Caco-2 (cell line): ENCODE measurements at regions of chr9 and their contacts with region 1.

Region 1: DNA sequence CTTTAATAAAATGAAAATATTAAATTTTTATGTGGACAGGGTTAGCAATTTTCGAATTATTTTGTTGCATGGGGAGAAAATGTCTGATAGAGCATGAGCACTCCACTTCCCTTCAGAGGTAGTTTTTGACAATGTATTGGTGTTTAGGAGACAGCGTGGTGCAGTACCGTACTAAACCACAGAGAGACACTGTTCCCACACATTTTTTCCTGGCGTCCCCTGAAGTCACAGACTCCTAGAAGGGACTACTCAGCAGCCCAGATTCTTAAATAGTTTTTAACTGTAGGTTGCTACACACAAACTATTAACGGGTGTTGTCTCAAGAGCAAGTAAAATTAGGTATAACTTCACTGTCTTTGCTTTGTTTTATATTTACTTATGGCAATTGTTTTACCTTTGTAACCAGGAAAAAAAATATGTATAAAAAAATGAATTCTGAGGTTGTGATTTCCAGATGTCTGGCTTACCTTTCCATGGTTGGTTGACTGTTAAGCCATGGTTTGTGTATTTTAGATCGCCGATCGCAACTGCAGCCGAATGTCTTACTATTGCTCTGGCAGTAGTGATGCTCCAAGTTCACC is 171.2 kb downstream of the DOCK8 start:
- DNase-seq: peak; percentile 55 to 63
- H3K4me3 ChIP-seq: no peak overlapping the region
- H3K4me3 Mint-ChIP-seq: no peak overlapping the region
- H3K27ac Mint-ChIP-seq: no peak overlapping the region
- H3K4me1 ChIP-seq: peaks cover 13% of the 10 kb centered on the region; the same call in 1 of the 2 replicates
- H3K4me1 Mint-ChIP-seq: no peaks in the 10 kb centered on the region
- H3K27me3 ChIP-seq: no peaks in the 10 kb centered on the region
- H3K27me3 Mint-ChIP-seq: no peaks in the 10 kb centered on the region
- CTCF ChIP-seq: peak; percentile 82 to 83

Region 2: GRCh38 chr9:469672-470551 is 84.0 kb after region 1 on chr9:
- CTCF ChIA-PET with region 1: no interaction called
- POLR2A ChIA-PET with region 1: no interaction called
- intact Hi-C with region 1: loop called (anchors 5 kb)
- DNase-seq: peak; percentile 85
- H3K4me3 ChIP-seq: peak overlapping the region; percentile 61
- H3K4me3 Mint-ChIP-seq: peak overlapping the region; percentile 94
- H3K27ac Mint-ChIP-seq: peak overlapping the region; percentile 95
- H3K4me1 ChIP-seq: peaks cover 28% of the 10 kb centered on the region
- H3K4me1 Mint-ChIP-seq: peaks cover 13% of the 10 kb centered on the region
- H3K27me3 ChIP-seq: no peaks in the 10 kb centered on the region
- H3K27me3 Mint-ChIP-seq: no peaks in the 10 kb centered on the region
- CTCF ChIP-seq: no peak

Region 3: DNA sequence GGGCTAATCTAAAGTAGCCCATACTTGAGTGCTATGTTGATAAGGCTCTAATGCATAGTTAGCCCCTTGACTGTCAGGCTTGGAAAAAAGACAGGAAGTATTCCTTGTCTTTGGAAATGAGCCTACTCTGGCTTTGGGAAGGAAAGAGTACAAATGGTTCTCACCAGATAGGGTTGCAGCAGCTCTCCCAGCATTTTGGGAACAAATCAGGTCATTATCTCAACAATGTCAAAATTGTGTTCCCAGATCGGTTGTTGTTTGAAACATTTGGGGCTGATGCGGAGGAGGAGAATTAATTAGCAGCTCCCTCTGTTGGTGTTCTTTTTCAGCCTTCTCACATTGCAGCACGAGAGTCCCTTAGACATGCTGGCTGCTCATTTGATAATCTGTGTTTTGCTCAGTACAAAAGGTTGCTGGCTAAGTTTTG is 160.9 kb after region 1 on chr9:
- CTCF ChIA-PET with region 1: no interaction called
- POLR2A ChIA-PET with region 1: no interaction called
- intact Hi-C with region 1: loop called (anchors 2 kb)
- DNase-seq: peak in 1 of 2 experiments; percentile 17
- H3K4me3 ChIP-seq: no peak overlapping the region
- H3K4me3 Mint-ChIP-seq: no peak overlapping the region
- H3K27ac Mint-ChIP-seq: peak overlapping the region; percentile 35
- H3K4me1 ChIP-seq: 0 out of 2 replicates have a peak, but pooled peaks cover 4% of the 10 kb centered on the region
- H3K4me1 Mint-ChIP-seq: peaks cover 27% of the 10 kb centered on the region
- H3K27me3 ChIP-seq: no peaks in the 10 kb centered on the region
- H3K27me3 Mint-ChIP-seq: no peaks in the 10 kb centered on the region
- CTCF ChIP-seq: peak; percentile 16 to 38

Region 4: GRCh38 chr9:684054-684890 is 298.4 kb after region 1 on chr9:
- CTCF ChIA-PET with region 1: no interaction called
- POLR2A ChIA-PET with region 1: no interaction called
- intact Hi-C with region 1: no loop called
- DNase-seq: no peak
- H3K4me3 ChIP-seq: peak overlapping the region; percentile 22
- H3K4me3 Mint-ChIP-seq: peak overlapping the region; percentile 34
- H3K27ac Mint-ChIP-seq: no peak overlapping the region
- H3K4me1 ChIP-seq: peaks cover 35% of the 10 kb centered on the region
- H3K4me1 Mint-ChIP-seq: no peaks in the 10 kb centered on the region
- H3K27me3 ChIP-seq: no peaks in the 10 kb centered on the region
- H3K27me3 Mint-ChIP-seq: no peaks in the 10 kb centered on the region
- CTCF ChIP-seq: no peak

Region 5: DNA sequence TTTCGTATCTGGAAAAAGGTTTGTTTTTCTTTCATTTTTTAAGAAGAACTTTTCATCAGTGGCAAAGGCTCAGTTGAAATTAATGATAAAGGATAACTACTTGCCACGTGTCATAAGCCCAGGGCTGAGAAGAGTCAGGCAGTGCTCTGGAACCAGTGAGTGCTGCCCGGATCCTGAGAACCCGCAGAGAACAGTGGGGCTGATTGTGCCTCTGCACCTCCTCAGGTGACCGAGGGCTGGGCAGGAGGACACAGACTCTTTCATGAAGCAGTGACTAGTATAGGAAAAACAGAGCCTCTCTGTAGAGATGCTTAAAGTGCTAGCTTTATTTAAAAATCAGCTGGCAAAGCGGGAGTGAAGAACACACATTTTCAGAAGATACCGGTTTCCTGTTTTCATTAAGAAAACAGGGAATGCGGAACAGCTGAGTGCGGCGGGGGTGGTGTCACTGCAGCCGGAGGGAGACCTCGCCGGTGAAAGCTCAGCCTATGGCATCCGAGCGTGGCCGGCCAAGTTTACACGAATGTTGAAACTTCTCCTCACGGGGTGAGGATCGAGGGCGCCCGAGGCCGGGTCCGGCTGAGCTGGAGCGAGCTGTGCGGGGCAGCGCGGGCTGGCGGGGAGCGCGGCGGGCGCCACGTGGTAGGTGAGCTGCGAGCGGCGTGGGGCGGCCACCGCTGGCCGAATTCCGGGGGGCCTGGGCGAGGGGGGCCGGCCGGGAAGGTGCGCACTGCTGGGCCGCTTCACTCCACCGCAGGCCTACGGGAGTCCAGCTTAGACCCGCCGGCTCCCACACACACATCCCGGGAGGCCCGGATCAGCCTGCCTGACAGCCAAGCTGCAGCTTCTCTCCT is 320.9 kb after region 1 on chr9:
- CTCF ChIA-PET with region 1: no interaction called
- POLR2A ChIA-PET with region 1: no interaction called
- intact Hi-C with region 1: loop called (anchors 5 kb)
- DNase-seq: peak; percentile 62 to 63
- H3K4me3 ChIP-seq: peak overlapping the region; percentile 57
- H3K4me3 Mint-ChIP-seq: peak overlapping the region; percentile 97
- H3K27ac Mint-ChIP-seq: peak overlapping the region; percentile 95
- H3K4me1 ChIP-seq: peaks cover 32% of the 10 kb centered on the region
- H3K4me1 Mint-ChIP-seq: peaks cover 23% of the 10 kb centered on the region
- H3K27me3 ChIP-seq: no peaks in the 10 kb centered on the region
- H3K27me3 Mint-ChIP-seq: no peaks in the 10 kb centered on the region
- CTCF ChIP-seq: no peak

Region 6: GRCh38 chr9:806285-807156 is 420.6 kb after region 1 on chr9:
- CTCF ChIA-PET with region 1: no interaction called
- POLR2A ChIA-PET with region 1: no interaction called
- intact Hi-C with region 1: loop called (anchors 1 kb)
- DNase-seq: peak in 1 of 2 experiments; percentile 27
- H3K4me3 ChIP-seq: no peak overlapping the region
- H3K4me3 Mint-ChIP-seq: no peak overlapping the region
- H3K27ac Mint-ChIP-seq: no peak overlapping the region
- H3K4me1 ChIP-seq: no peaks in the 10 kb centered on the region
- H3K4me1 Mint-ChIP-seq: peaks cover 5% of the 10 kb centered on the region
- H3K27me3 ChIP-seq: no peaks in the 10 kb centered on the region
- H3K27me3 Mint-ChIP-seq: no peaks in the 10 kb centered on the region
- CTCF ChIP-seq: peak; percentile 58 to 63